Uterus (tissue), 4 donors: ENCODE measurements at regions of chr22 and their contacts with region 1.

Region 1: DNA sequence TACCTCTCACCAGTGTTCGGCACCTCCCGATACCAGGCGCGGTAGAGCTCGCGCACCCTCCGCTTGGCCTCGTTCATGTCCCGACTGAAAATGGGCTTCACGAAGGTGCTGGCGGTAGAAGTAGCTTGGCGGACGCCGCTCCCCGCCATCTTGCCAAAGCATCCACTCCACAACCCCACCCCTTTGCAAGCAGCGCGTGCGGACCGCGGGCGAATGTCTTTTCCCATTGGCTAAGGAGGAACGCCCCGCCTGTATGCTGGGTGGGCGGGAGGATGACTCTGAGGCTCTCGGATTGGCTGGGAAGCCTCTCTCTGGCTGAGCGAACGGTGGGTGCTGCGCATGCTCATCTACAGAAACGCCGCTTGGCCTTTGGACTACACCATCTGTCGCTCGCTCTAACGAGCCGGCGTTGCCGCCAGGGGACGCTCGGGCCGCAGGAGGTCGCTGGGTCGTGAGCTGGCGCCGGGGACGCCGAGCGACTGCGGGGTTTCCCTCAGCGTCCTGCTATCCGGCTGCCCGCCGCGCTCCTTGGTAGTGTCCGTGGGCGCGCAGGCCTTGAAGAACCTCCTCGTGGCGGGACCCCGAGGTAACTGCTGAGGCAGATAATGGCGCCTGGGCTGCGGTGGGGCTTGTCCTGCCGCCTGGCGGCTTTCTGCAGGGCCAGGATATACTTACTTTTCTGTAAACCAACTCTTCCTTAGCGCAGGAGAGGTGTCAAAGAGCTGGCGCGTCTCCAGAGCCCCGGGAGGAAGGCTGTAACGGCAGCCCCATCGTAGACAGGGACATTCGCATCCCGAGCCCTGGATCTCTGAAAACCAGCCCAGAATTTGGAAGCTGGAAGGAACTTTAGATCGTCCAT is at the start of gene NDUFA6:
- DNase-seq: peak; percentile 98 to 99
- H3K4me3 ChIP-seq: peak within 1 kb of the TSS; percentile 84 to 92
- H3K27ac ChIP-seq: peak within 1 kb of the TSS; percentile 91 to 94
- H3K4me1 ChIP-seq: peaks cover 4 to 5% of the 10 kb centered on the region in 2 donors
- H3K27me3 ChIP-seq: no peaks in the 10 kb centered on the region
- CTCF ChIP-seq: peak; percentile 93 to 99 (median 97)
- POLR2A ChIP-seq: peak; percentile 89 to 90
- total RNA-seq, gene NDUFA6: 36.5 to 116 (median 46.0) TPM

Region 2: DNA sequence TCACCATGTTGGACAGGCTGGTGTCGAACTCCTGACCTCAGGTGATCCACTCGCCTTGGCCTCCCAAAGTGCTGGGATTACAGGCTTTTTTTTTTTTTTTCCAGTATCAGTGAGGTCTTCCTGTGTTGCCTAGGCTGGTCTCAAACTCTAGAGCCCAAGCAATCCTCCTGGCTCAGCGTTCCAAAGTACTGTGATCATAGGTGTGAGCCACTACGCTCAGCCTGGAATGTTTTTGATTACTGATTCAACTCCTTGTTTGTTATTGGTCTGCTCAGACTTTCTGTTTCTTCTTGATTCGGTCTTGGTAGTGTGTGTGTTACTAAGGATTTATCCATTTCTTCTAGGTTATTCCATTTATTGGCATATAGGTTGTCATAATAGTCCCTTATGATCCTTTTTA is 51.6 kb before region 1 on chr22:
- intact Hi-C with region 1: no loop called
- DNase-seq: no peak
- H3K4me3 ChIP-seq: no peak overlapping the region
- H3K27ac ChIP-seq: no peak overlapping the region
- H3K4me1 ChIP-seq: no peaks in the 10 kb centered on the region
- H3K27me3 ChIP-seq: no peaks in the 10 kb centered on the region
- CTCF ChIP-seq: no peak
- POLR2A ChIP-seq: no peak

Region 3: DNA sequence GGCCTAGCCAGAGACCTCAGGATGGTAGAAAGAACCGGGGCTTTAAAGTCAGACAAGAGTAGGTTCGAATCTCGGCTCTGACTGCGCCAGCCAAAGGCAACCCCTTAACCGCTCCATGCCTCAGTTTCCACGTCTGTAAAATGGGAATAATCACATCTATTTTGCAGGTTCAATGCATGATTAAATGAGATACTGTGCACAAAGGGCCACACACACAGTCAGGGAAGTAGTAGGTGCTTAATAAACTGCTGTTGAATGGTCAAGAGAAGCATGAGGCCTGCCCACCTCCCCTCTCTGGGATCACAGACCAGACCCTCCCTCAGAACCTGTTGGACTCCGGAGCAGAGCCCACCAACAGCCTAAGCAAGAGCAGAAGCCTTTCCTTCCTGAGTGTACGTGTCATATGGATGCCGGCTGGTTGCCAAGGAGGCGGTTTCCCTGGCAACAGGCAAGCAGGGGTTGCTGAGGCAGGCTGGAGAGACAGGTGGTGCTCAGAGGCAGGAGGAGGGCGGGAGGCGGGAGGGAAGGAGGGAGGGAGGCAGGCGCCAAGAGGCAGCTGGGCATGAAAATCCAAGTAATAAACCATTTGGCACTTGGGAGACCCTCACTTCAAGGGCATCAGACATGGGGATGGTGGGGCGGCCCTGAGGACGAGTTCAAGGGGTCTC is 297.4 kb after region 1 on chr22:
- intact Hi-C with region 1: no loop called
- DNase-seq: no peak
- H3K4me3 ChIP-seq: no peak overlapping the region
- H3K27ac ChIP-seq: no peak overlapping the region
- H3K4me1 ChIP-seq: no peaks in the 10 kb centered on the region
- H3K27me3 ChIP-seq: no peaks in the 10 kb centered on the region
- CTCF ChIP-seq: no peak
- POLR2A ChIP-seq: no peak

Region 4: GRCh38 chr22:42432020-42432596 is 341.3 kb after region 1 on chr22 and contains the start of gene NFAM1:
- intact Hi-C with region 1: loop called (anchors 5 kb)
- DNase-seq: no peak
- H3K4me3 ChIP-seq: no peak within 1 kb of the TSS
- H3K27ac ChIP-seq: no peak within 1 kb of the TSS
- H3K4me1 ChIP-seq: no peaks in the 10 kb centered on the region
- H3K27me3 ChIP-seq: no peaks in the 10 kb centered on the region
- CTCF ChIP-seq: no peak
- POLR2A ChIP-seq: no peak
- total RNA-seq, gene NFAM1: 0.26 to 1.1 (median 0.64) TPM in 3 of 4 donors, not detected in the other